Natural killer cell (primary cell): ENCODE measurements at regions of chr7 and their contacts with region 1.

Region 1: DNA sequence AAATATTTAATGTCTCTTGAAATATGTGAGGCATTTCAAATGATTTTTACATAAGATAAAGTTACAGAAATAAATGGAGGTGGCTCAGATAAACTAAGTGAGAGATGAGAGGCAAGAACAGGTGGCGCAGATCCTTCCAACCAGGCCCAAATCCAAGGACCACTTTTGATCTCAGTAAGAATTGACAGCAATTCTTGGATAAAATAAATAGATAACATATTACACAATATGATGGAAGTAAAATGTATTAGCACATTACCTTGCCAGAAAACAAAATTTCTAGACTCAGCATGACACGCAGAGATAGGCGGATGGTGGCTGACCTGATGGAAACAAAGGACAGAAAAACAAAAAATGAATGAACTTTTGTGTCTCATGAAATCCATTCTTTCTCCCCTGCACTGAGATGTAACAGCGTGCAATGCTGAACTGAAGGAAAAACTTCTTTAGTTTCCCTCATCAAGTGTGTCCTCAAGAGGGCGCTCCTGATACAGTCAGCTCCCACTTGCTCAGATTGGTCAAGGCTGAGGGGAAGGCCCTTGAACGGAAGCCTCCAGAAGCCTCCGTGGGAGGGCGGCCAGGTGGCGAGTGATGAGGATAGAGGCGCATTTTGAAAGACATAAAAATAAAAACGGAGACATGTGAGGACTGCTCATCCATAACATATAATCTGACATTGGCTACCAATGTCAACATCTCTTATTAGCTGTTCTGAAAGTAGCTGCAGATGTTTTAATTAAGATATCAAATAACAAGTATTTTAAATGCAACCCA is 62.8 kb upstream of the GSDME start:
- DNase-seq: peak; percentile 62 to 91
- ATAC-seq: peak; percentile 44 to 78 (median 61)
- H3K4me3 ChIP-seq: no peak overlapping the region
- H3K4me3 Mint-ChIP-seq: peak overlapping the region; percentile 88
- H3K27ac ChIP-seq: peak overlapping the region; percentile 93
- H3K27ac Mint-ChIP-seq: peak overlapping the region; percentile 98 to 99
- H3K4me1 ChIP-seq: peaks cover 25% of the 10 kb centered on the region
- H3K4me1 Mint-ChIP-seq: peaks cover 28 to 32% of the 10 kb centered on the region in 2 donors
- H3K27me3 ChIP-seq: no peaks in the 10 kb centered on the region
- H3K27me3 Mint-ChIP-seq: no peaks in the 10 kb centered on the region
- CTCF ChIP-seq: peak; percentile 86

Region 2: DNA sequence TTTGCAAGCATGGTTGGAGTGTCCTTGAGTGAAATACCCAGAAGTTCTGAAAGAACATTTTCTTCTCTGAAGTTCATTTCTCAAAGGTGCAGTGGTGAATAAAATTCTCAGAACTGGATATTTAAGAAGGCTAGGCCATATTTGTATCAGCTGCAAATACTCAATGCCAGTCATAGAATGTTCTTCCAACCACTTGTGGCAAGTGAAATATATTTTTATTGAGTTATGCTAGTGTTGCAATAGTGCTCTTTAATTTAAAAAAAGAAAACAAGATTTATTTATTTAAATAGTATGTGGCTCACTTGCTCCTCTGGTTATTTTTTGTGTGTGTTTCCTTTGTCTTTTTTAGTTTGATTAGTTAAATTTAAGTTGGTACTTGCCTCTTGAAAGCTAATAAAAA is 182.4 kb before region 1 on chr7:
- intact Hi-C with region 1: no loop called
- DNase-seq: no peak
- ATAC-seq: no peak
- H3K4me3 ChIP-seq: no peak overlapping the region
- H3K4me3 Mint-ChIP-seq: no peak overlapping the region
- H3K27ac ChIP-seq: no peak overlapping the region
- H3K27ac Mint-ChIP-seq: no peak overlapping the region
- H3K4me1 ChIP-seq: no peaks in the 10 kb centered on the region
- H3K4me1 Mint-ChIP-seq: peaks cover 0 to 2% of the 10 kb centered on the region in 2 donors
- H3K27me3 ChIP-seq: no peaks in the 10 kb centered on the region
- H3K27me3 Mint-ChIP-seq: no peaks in the 10 kb centered on the region
- CTCF ChIP-seq: no peak

Region 3: GRCh38 chr7:24898691-24899090 is 78.6 kb after region 1 on chr7:
- intact Hi-C with region 1: loop called (anchors 1 kb)
- DNase-seq: peak in 1 of 2 donors; percentile 32
- ATAC-seq: peak; percentile 81 to 87 (median 85)
- H3K4me3 ChIP-seq: no peak overlapping the region
- H3K4me3 Mint-ChIP-seq: peak overlapping the region; percentile 76
- H3K27ac ChIP-seq: peak overlapping the region; percentile 50
- H3K27ac Mint-ChIP-seq: peak overlapping the region; percentile 84 to 90
- H3K4me1 ChIP-seq: peaks cover 38% of the 10 kb centered on the region
- H3K4me1 Mint-ChIP-seq: peaks cover 77 to 85% of the 10 kb centered on the region in 2 donors
- H3K27me3 ChIP-seq: no peaks in the 10 kb centered on the region
- H3K27me3 Mint-ChIP-seq: no peaks in the 10 kb centered on the region
- CTCF ChIP-seq: no peak

Region 4: DNA sequence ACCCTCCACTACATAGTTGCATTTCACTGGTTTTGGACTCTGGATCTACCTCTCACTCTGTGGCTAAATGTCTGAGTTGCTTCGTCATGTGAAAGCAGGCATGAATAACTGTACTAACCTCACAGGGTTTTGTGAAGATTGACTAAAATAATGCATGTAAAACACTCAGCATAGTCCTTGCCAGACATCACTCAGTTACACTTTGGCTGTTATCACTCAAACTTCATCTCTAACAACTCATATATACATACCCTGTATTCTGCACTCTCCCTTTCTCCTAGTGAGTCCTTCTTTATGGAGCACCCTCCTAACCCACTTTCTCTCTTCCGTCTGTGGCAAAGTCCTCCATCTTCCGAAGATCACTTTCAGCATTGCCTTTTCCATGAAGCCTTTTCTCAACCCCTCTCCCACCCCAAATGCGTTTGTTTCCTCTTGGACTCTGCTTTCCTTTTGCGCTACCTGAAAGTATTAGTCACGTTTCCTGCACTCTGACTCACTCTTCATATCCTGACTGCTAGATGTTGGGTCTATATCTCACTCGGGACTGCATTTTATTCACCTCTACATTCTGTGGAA is 87.3 kb after region 1 on chr7:
- intact Hi-C with region 1: loop called (anchors 1 kb)
- DNase-seq: peak in 1 of 2 donors; percentile 63
- ATAC-seq: peak; percentile 49 to 65 (median 60)
- H3K4me3 ChIP-seq: no peak overlapping the region
- H3K4me3 Mint-ChIP-seq: no peak overlapping the region
- H3K27ac ChIP-seq: peak overlapping the region; percentile 15
- H3K27ac Mint-ChIP-seq: no peak overlapping the region
- H3K4me1 ChIP-seq: peaks cover 57% of the 10 kb centered on the region
- H3K4me1 Mint-ChIP-seq: peaks cover 54 to 57% of the 10 kb centered on the region in 2 donors
- H3K27me3 ChIP-seq: no peaks in the 10 kb centered on the region
- H3K27me3 Mint-ChIP-seq: no peaks in the 10 kb centered on the region
- CTCF ChIP-seq: no peak

Region 5: DNA sequence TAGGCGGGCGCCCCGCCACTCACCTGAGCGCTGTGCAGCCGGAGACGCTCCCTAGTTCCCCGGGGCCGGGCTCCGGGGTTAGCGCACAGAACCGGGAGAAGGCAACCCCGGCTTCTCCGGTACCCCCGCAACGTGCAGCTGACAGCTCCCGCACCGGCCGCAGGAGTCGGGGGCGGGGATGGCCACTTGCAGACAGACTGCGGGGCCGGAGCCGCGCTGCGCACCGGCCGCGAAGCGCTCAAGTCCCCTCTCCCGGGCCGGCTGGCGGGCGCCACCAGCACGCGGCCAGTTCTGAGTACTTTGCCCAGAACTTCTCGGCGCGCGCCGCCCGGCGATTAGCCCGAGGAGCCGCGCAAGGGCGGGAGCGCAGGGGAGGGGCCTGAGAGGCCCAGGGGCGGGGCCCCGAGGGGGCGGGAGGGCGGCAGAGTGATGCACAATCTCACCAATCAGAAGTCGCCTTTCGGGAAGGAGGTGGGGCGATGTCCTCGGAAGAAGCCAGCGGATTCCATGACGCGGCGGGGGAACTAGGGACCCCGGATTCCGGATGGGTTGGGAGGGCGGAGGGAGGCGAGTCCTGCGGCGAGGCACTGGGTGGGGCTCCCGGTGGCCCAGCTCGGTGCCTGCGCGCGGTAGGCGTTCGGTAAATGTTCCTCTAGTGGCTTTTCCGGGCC is 159.9 kb after region 1 on chr7 and contains the start of gene OSBPL3:
- intact Hi-C with region 1: loop called (anchors 1 kb)
- DNase-seq: peak; percentile 96 to 98
- ATAC-seq: peak; percentile 84 to 95 (median 85)
- H3K4me3 ChIP-seq: peak within 1 kb of the TSS; percentile 93
- H3K4me3 Mint-ChIP-seq: peak within 1 kb of the TSS; percentile 91
- H3K27ac ChIP-seq: peak within 1 kb of the TSS; percentile 85
- H3K27ac Mint-ChIP-seq: peak within 1 kb of the TSS; percentile 92
- H3K4me1 ChIP-seq: peaks cover 25% of the 10 kb centered on the region
- H3K4me1 Mint-ChIP-seq: peaks cover 56 to 66% of the 10 kb centered on the region in 2 donors
- H3K27me3 ChIP-seq: no peaks in the 10 kb centered on the region
- H3K27me3 Mint-ChIP-seq: no peaks in the 10 kb centered on the region
- CTCF ChIP-seq: no peak
- total RNA-seq, gene OSBPL3: 50.7 to 99.1 (median 65.1) TPM

Region 6: GRCh38 chr7:25009257-25009656 is 189.2 kb after region 1 on chr7:
- intact Hi-C with region 1: no loop called
- DNase-seq: no peak
- ATAC-seq: no peak
- H3K4me3 ChIP-seq: no peak overlapping the region
- H3K4me3 Mint-ChIP-seq: no peak overlapping the region
- H3K27ac ChIP-seq: no peak overlapping the region
- H3K27ac Mint-ChIP-seq: no peak overlapping the region
- H3K4me1 ChIP-seq: no peaks in the 10 kb centered on the region
- H3K4me1 Mint-ChIP-seq: no peaks in the 10 kb centered on the region
- H3K27me3 ChIP-seq: no peaks in the 10 kb centered on the region
- H3K27me3 Mint-ChIP-seq: peaks cover 0 to 4% of the 10 kb centered on the region in 2 donors
- CTCF ChIP-seq: no peak

Region 7: DNA sequence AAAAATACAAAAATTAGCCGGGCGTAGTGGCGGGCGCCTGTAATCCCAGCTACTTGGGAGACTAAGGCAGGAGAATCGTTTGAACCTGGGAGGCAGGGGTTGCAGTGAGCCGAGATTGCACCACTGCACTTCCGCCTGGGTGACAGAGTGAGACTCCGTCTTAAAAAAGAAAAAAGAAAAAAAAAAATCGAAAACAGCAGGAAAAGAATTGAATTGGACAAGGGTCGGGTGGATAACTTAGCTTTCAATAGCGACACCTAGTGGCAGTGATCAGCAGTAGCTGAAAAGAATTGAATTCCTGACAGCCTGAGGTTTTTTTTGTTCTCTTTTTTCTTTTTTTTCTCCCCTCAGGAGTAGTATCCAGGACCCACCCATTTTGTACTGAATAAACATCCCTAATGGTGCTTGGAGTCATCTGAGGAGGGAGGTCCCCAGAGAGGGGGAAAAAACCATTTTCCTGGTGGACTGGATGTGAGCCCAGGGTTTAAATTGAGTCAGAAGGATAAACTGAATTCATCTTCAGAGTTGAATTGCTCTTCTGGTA is 249.9 kb after region 1 on chr7:
- intact Hi-C with region 1: loop called (anchors 1 kb)
- DNase-seq: peak in 1 of 2 donors; percentile 84
- ATAC-seq: peak; percentile 55 to 73 (median 70)
- H3K4me3 ChIP-seq: no peak overlapping the region
- H3K4me3 Mint-ChIP-seq: no peak overlapping the region
- H3K27ac ChIP-seq: no peak overlapping the region
- H3K27ac Mint-ChIP-seq: no peak overlapping the region
- H3K4me1 ChIP-seq: peaks cover 4% of the 10 kb centered on the region
- H3K4me1 Mint-ChIP-seq: no peaks in the 10 kb centered on the region
- H3K27me3 ChIP-seq: no peaks in the 10 kb centered on the region
- H3K27me3 Mint-ChIP-seq: peaks cover 0 to 2% of the 10 kb centered on the region in 2 donors
- CTCF ChIP-seq: peak; percentile 98

Region 8: DNA sequence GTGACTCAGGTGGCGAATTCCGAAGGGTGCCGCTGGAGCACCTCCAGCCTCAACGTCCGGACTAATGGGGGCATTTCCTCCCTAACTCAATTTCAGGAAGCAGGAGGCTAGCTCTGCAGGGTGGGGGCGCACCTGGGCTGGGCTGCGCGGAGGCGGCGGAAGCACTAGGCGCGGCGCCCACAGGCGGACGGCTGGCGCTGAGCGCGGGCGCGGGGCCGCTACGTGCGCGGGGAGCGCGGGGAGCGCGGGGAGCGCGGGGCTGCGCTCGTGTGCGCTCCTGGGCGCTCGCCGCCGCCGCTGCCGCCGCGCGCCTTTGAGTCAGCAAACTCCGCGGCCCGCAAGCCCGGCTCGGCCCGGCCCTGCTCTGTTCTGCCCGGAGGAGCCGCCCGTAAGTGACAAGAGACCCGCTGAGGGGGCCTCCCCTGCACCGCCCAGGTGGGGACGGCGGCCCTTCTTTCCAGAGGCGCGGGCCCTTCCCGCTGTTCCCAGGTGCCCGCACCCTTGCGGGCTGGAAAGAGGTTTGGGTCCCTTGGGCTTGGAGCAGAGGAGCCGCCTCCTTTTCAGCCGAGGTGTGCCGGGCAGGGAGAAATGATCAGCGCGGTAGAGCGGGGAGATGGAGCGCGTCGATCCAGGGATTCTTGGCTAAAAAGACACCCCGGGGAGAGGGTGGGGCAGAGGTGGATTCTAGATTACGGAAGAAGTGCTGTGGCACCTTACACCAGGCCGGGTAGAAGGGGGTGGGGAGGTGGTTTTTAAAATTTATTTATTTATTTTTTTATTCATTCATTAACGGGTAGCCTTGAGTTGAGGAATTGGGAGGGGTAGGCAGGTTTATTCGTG is 1471.8 kb after region 1 on chr7 and contains the start of gene SNX10:
- intact Hi-C with region 1: loop called (anchors 10 kb)
- DNase-seq: peak; percentile 70 to 89
- ATAC-seq: peak; percentile 66 to 83 (median 73)
- H3K4me3 ChIP-seq: peak within 1 kb of the TSS; percentile 98
- H3K4me3 Mint-ChIP-seq: peak within 1 kb of the TSS; percentile 97
- H3K27ac ChIP-seq: peak within 1 kb of the TSS; percentile 94
- H3K27ac Mint-ChIP-seq: peak within 1 kb of the TSS; percentile 97
- H3K4me1 ChIP-seq: peaks cover 42% of the 10 kb centered on the region
- H3K4me1 Mint-ChIP-seq: peaks cover 36 to 46% of the 10 kb centered on the region in 2 donors
- H3K27me3 ChIP-seq: no peaks in the 10 kb centered on the region
- H3K27me3 Mint-ChIP-seq: no peaks in the 10 kb centered on the region
- CTCF ChIP-seq: no peak
- total RNA-seq, gene SNX10: 17.2 to 26.8 (median 21.3) TPM